SK-N-SH (cell line): ENCODE measurements at regions of chr11 and their contacts with region 1.

Region 1: GRCh38 chr11:65204646-65205601 is 23.2 kb downstream of the CAPN1 start:
- DNase-seq: peak; percentile 92
- H3K4me3 ChIP-seq: no peak overlapping the region
- H3K27ac ChIP-seq: no peak overlapping the region
- H3K4me1 ChIP-seq: no peaks in the 10 kb centered on the region
- H3K27me3 ChIP-seq: no peaks in the 10 kb centered on the region
- CTCF ChIP-seq: peak; percentile 85
- EP300 ChIP-seq: no peak
- RAD21 ChIP-seq: peak; percentile 70

Region 2: GRCh38 chr11:65194564-65194963 is 10.4 kb before region 1 on chr11:
- CTCF ChIA-PET with region 1: interaction called, 10 read pairs
- POLR2A ChIA-PET with region 1: no interaction called
- DNase-seq: no peak
- H3K4me3 ChIP-seq: no peak overlapping the region
- H3K27ac ChIP-seq: no peak overlapping the region
- H3K4me1 ChIP-seq: no peaks in the 10 kb centered on the region
- H3K27me3 ChIP-seq: no peaks in the 10 kb centered on the region
- CTCF ChIP-seq: no peak
- EP300 ChIP-seq: no peak
- RAD21 ChIP-seq: no peak

Region 3: GRCh38 chr11:65251476-65251875 is 46.6 kb after region 1 on chr11:
- CTCF ChIA-PET with region 1: interaction called, 15 read pairs
- POLR2A ChIA-PET with region 1: no interaction called
- DNase-seq: no peak
- H3K4me3 ChIP-seq: no peak overlapping the region
- H3K27ac ChIP-seq: no peak overlapping the region
- H3K4me1 ChIP-seq: no peaks in the 10 kb centered on the region
- H3K27me3 ChIP-seq: no peaks in the 10 kb centered on the region
- CTCF ChIP-seq: no peak
- EP300 ChIP-seq: no peak
- RAD21 ChIP-seq: no peak